ENCODE measurements at regions of chr11 and their contacts with region 1.

Region 1: DNA sequence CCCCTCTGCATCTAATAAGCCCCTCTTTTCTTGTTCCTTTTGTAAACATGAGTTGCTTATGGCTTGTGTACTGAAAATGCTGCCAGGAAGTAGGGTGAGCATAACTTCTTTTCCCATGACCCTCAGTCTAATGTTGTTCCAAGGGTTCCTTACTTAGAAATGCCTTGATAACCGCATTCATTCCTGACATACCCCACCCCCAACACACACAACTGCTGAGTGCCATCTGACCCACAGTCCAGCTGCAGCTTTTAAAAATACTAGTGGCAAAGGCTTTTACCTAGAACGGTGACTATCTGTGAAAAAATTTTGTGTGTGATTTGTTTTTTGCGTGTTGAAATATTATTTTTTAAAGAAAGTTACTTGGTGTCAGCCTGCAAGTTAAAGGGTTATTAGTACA is 52.6 kb downstream of the ARHGAP42 start:
- DNase-seq: no peak
- ATAC-seq: peak; percentile 63
- H3K4me3 ChIP-seq: no peak overlapping the region
- H3K27ac ChIP-seq: no peak overlapping the region
- H3K4me1 ChIP-seq: peaks cover 0 to 6% of the 10 kb centered on the region in 2 donors
- H3K27me3 ChIP-seq: no peaks in the 10 kb centered on the region

Region 2: GRCh38 chr11:100546714-100547113 is 193.0 kb before region 1 on chr11:
- intact Hi-C with region 1: no loop called
- DNase-seq: no peak
- ATAC-seq: no peak
- H3K4me3 ChIP-seq: no peak overlapping the region
- H3K27ac ChIP-seq: no peak overlapping the region
- H3K4me1 ChIP-seq: no peaks in the 10 kb centered on the region
- H3K27me3 ChIP-seq: no peaks in the 10 kb centered on the region

Region 3: GRCh38 chr11:100687630-100688395 is 51.9 kb before region 1 on chr11:
- intact Hi-C with region 1: loop called in 1 of 2 experiments (anchors 5 kb)
- DNase-seq: peak; percentile 58 to 80
- ATAC-seq: peak; percentile 79
- H3K4me3 ChIP-seq: peak overlapping the region; percentile 69 to 80
- H3K27ac ChIP-seq: no peak overlapping the region
- H3K4me1 ChIP-seq: no peaks in the 10 kb centered on the region
- H3K27me3 ChIP-seq: no peaks in the 10 kb centered on the region